HepG2 (cell line): ENCODE measurements at regions of chr11 and their contacts with region 1.

Region 1: GRCh38 chr11:94623120-94623735 is 56.1 kb downstream of the PIWIL4 start:
- DNase-seq: peak; percentile 74
- ATAC-seq: peak; percentile 97
- H3K4me3 ChIP-seq: no peak overlapping the region
- H3K27ac ChIP-seq: no peak overlapping the region
- H3K4me1 ChIP-seq: no peaks in the 10 kb centered on the region
- H3K27me3 ChIP-seq: no peaks in the 10 kb centered on the region
- CTCF ChIP-seq: peak; percentile 81
- EP300 ChIP-seq: no peak
- POLR2A ChIP-seq: no peak
- RAD21 ChIP-seq: peak; percentile 47

Region 2: DNA sequence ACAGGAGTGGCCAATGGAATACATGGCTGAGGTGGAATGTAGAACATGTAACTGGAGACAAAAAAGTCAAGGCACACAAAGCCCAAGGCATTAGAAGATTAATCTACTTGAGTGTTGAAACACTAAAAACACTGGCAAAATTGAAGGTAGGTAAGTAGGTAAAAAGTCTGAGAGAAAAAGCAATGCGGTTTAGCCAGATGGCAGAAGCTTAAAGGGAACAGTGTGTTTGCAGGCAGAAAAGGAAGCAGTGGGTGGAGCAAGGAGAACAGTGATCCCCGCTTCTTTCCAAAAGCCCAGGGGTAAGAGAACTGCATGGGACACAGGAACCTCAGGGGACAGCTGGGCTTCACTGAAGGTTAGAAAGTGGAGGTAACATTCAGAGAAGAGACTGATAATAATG is 145.6 kb before region 1 on chr11:
- CTCF ChIA-PET with region 1: no interaction called
- POLR2A ChIA-PET with region 1: no interaction called
- in situ Hi-C with region 1: no loop called
- intact Hi-C with region 1: no loop called
- DNase-seq: no peak
- ATAC-seq: no peak
- H3K4me3 ChIP-seq: no peak overlapping the region
- H3K27ac ChIP-seq: no peak overlapping the region
- H3K4me1 ChIP-seq: no peaks in the 10 kb centered on the region
- H3K27me3 ChIP-seq: no peaks in the 10 kb centered on the region
- CTCF ChIP-seq: no peak
- EP300 ChIP-seq: no peak
- POLR2A ChIP-seq: no peak
- RAD21 ChIP-seq: no peak

Region 3: DNA sequence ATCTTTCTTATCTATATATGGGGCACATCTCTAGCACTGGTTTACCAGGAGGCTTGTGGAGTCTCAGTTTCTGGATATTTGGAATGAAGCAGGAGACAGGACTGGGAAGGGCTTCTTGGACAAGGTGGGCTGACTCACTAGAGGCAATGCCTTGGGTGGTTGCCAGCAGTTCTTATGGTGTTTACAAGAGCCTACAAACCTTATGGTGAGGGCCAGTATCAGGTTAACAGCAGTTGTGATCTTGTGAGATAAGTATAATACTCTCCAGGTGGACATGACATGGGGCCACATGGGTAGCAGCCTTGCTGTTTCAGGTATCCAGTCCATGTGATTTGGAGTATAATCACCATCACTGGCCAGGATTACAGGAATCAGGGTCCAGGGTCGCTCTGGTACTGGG is 69.3 kb before region 1 on chr11:
- CTCF ChIA-PET with region 1: no interaction called
- POLR2A ChIA-PET with region 1: no interaction called
- in situ Hi-C with region 1: no loop called
- intact Hi-C with region 1: no loop called
- DNase-seq: no peak
- ATAC-seq: no peak
- H3K4me3 ChIP-seq: no peak overlapping the region
- H3K27ac ChIP-seq: no peak overlapping the region
- H3K4me1 ChIP-seq: no peaks in the 10 kb centered on the region
- H3K27me3 ChIP-seq: no peaks in the 10 kb centered on the region
- CTCF ChIP-seq: no peak
- EP300 ChIP-seq: no peak
- POLR2A ChIP-seq: no peak
- RAD21 ChIP-seq: no peak

Region 4: GRCh38 chr11:94741022-94741679 is 117.9 kb after region 1 on chr11:
- CTCF ChIA-PET with region 1: no interaction called
- POLR2A ChIA-PET with region 1: no interaction called
- in situ Hi-C with region 1: no loop called
- intact Hi-C with region 1: loop called (anchors 10 kb)
- DNase-seq: peak; percentile 41
- ATAC-seq: peak; percentile 97
- H3K4me3 ChIP-seq: peak overlapping the region in 1 of 3 experiments; percentile 48; a peak in 1 of 6 replicates
- H3K27ac ChIP-seq: no peak overlapping the region
- H3K4me1 ChIP-seq: peaks cover 9% of the 10 kb centered on the region
- H3K27me3 ChIP-seq: peaks cover 4 to 32% of the 10 kb centered on the region in 2 experiments
- CTCF ChIP-seq: peak; percentile 36
- EP300 ChIP-seq: no peak
- POLR2A ChIP-seq: no peak
- RAD21 ChIP-seq: no peak

Region 5: DNA sequence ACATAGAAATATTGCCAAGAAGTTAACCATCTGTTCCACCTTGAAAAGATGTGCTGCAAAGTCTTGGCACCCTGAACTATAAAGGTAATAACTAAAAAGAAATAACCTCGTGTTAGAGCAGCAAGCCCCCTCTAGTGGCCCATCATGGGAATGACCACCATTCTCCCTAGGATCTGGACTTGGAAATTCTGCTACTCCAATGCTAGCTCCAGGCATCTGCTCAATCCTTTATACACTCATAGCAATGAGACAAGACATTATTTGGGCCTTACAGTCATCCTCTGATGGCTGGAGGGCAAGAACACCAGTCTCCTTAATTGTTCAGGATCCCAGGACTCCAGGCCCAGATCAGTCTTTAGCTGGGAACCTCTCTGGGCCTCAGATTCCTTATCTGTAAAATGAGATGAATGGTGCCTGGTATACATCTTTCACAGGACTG is 274.1 kb after region 1 on chr11:
- CTCF ChIA-PET with region 1: interaction called, 19 read pairs
- POLR2A ChIA-PET with region 1: no interaction called
- in situ Hi-C with region 1: loop called (anchors 5 kb)
- intact Hi-C with region 1: no loop called
- DNase-seq: peak; percentile 11
- ATAC-seq: peak; percentile 58
- H3K4me3 ChIP-seq: no peak overlapping the region
- H3K27ac ChIP-seq: no peak overlapping the region
- H3K4me1 ChIP-seq: no peaks in the 10 kb centered on the region
- H3K27me3 ChIP-seq: no peaks in the 10 kb centered on the region
- CTCF ChIP-seq: peak; percentile 75
- EP300 ChIP-seq: no peak
- POLR2A ChIP-seq: no peak
- RAD21 ChIP-seq: peak; percentile 36; the same call in 1 of the 2 replicates

Region 6: DNA sequence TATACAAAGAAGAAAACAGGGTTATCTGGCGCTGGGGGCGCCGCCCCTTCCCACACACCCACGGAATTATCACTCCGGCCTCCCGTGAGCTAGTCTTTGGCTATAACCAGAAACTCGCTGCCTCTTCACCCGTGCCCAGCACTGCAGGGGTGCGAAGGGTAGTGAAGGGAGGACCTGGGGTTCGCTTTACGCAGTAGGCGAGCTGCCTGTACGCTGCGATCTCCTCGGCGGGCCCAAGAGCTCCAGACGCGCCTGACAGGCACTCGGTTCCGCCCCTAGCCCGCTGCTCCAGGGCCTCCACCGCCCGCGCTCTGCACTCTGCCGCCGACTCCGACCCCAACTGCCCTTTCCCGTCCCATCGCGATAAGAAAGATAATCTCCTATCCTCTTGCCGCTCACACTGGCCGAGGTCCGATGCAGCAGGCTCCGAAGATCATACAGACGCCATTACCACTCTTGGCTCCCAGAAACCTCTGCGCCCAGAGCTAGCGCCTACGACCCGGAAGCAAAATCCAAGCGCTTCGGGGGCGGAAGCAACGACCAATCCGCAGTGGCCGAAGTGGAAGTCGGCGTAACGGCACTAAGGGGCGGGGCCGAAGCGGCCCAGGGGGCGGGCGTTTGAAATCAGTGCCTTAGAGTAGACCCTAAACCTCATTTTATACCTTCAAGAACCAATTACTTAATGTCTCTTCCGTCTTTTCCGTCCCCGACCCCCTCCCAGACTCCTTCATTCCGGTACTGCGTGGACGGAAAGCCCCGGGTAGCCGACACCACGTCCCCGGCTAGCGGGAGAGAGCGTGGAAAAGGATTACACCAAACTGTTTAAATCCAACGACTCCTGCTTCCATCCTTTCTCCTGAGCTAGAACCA is 350.1 kb after region 1 on chr11 and contains the starts of genes CWC15 and KDM4D:
- CTCF ChIA-PET with region 1: no interaction called
- POLR2A ChIA-PET with region 1: no interaction called
- in situ Hi-C with region 1: no loop called
- intact Hi-C with region 1: loop called (anchors 1 kb)
- DNase-seq: peak; percentile 87
- ATAC-seq: peak; percentile 100
- H3K4me3 ChIP-seq: peak within 1 kb of the TSS; percentile 93 to 99 (median 97)
- H3K27ac ChIP-seq: peak within 1 kb of the TSS; percentile 81
- H3K4me1 ChIP-seq: peaks cover 25% of the 10 kb centered on the region
- H3K27me3 ChIP-seq: no peaks in the 10 kb centered on the region; a peak in 1 of 5 replicates
- CTCF ChIP-seq: no peak
- EP300 ChIP-seq: 0 out of 4 replicates have a peak, but pooled peaks of 1 of the 2 experiments have one; percentile 20
- POLR2A ChIP-seq: peak; percentile 81 to 87
- RAD21 ChIP-seq: 0 out of 2 replicates have a peak, but pooled peaks have one; percentile 14
- total RNA-seq, gene CWC15: 61.2 and 73.7 TPM in 2 replicates
- total RNA-seq, gene KDM4D: 1.3 and 2.0 TPM in 2 replicates

Region 7: GRCh38 chr11:95138448-95138847 is 515.2 kb after region 1 on chr11:
- CTCF ChIA-PET with region 1: no interaction called
- POLR2A ChIA-PET with region 1: no interaction called
- in situ Hi-C with region 1: loop called (anchors 25 kb)
- intact Hi-C with region 1: no loop called
- DNase-seq: no peak
- ATAC-seq: peak; percentile 90
- H3K4me3 ChIP-seq: no peak overlapping the region
- H3K27ac ChIP-seq: no peak overlapping the region
- H3K4me1 ChIP-seq: no peaks in the 10 kb centered on the region
- H3K27me3 ChIP-seq: peaks cover 0 to 4% of the 10 kb centered on the region in 2 experiments; a peak in 2 of 5 replicates
- CTCF ChIP-seq: peak; percentile 37
- EP300 ChIP-seq: no peak
- POLR2A ChIP-seq: no peak
- RAD21 ChIP-seq: no peak

Region 8: GRCh38 chr11:95764267-95764898 is 1141.2 kb after region 1 on chr11:
- CTCF ChIA-PET with region 1: no interaction called
- POLR2A ChIA-PET with region 1: no interaction called
- in situ Hi-C with region 1: loop called (anchors 25 kb)
- intact Hi-C with region 1: loop called (anchors 10 kb)
- DNase-seq: peak; percentile 47
- ATAC-seq: peak; percentile 71
- H3K4me3 ChIP-seq: no peak overlapping the region
- H3K27ac ChIP-seq: no peak overlapping the region
- H3K4me1 ChIP-seq: no peaks in the 10 kb centered on the region
- H3K27me3 ChIP-seq: peaks cover 0 to 4% of the 10 kb centered on the region in 2 experiments; a peak in 2 of 5 replicates
- CTCF ChIP-seq: peak; percentile 54
- EP300 ChIP-seq: no peak
- POLR2A ChIP-seq: no peak
- RAD21 ChIP-seq: no peak